ENCODE measurements at regions of chr14 and their contacts with region 1.

Region 1: DNA sequence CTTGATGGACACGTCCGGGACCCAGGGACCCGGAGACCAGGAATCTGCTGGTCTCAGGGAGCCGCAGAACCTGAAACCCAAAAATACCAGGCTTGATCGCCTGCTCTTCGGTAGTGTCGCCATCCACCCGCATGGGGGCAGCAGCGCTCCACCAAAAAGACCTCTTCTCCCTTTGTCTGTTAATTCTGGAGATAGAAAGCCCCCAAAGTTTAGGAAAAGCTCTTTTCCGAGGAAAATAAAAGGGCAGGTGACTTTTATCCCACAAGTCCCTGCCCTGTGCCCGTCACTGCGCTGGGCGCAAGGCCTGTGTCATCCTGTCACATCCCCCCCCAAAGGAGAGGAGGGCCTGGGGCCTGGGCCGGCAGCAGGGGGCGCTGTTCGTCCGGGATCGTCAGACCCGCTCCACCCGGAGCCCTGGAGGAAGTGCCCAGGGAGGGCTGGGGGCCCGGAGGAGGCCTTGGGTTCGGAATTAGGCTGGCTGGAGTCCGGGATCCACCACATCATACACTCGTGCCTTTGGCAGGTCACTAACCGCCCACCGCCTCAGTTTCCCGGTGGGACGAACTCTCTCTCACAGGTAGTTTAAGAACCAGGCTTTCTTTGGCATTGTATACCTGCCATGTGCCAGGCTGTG is 31.9 kb downstream of the DAD1 start:
- DNase-seq: peak; percentile 92 to 94
- ATAC-seq: peak; percentile 32 to 63 (median 34)
- H3K4me3 ChIP-seq: peak overlapping the region; percentile 32
- H3K4me3 Mint-ChIP-seq: peak overlapping the region; percentile 94
- H3K27ac ChIP-seq: peak overlapping the region; percentile 97
- H3K27ac Mint-ChIP-seq: peak overlapping the region; percentile 98 to 100
- H3K4me1 ChIP-seq: peaks cover 98% of the 10 kb centered on the region
- H3K4me1 Mint-ChIP-seq: peaks cover 82 to 91% of the 10 kb centered on the region in 2 donors
- H3K27me3 ChIP-seq: no peaks in the 10 kb centered on the region
- H3K27me3 Mint-ChIP-seq: peaks cover 0 to 4% of the 10 kb centered on the region in 2 donors
- CTCF ChIP-seq: peak; percentile 100

Region 2: GRCh38 chr14:22460461-22461195 is 96.5 kb before region 1 on chr14:
- intact Hi-C with region 1: loop called (anchors 1 kb)
- DNase-seq: peak in 1 of 2 donors; percentile 44
- ATAC-seq: peak; percentile 82 to 94 (median 92)
- H3K4me3 ChIP-seq: peak overlapping the region; percentile 62
- H3K4me3 Mint-ChIP-seq: peak overlapping the region; percentile 96
- H3K27ac ChIP-seq: peak overlapping the region; percentile 79
- H3K27ac Mint-ChIP-seq: peak overlapping the region; percentile 80 to 89
- H3K4me1 ChIP-seq: peaks cover 67% of the 10 kb centered on the region
- H3K4me1 Mint-ChIP-seq: peaks cover 93 to 98% of the 10 kb centered on the region in 2 donors
- H3K27me3 ChIP-seq: no peaks in the 10 kb centered on the region
- H3K27me3 Mint-ChIP-seq: no peaks in the 10 kb centered on the region
- CTCF ChIP-seq: no peak

Region 3: DNA sequence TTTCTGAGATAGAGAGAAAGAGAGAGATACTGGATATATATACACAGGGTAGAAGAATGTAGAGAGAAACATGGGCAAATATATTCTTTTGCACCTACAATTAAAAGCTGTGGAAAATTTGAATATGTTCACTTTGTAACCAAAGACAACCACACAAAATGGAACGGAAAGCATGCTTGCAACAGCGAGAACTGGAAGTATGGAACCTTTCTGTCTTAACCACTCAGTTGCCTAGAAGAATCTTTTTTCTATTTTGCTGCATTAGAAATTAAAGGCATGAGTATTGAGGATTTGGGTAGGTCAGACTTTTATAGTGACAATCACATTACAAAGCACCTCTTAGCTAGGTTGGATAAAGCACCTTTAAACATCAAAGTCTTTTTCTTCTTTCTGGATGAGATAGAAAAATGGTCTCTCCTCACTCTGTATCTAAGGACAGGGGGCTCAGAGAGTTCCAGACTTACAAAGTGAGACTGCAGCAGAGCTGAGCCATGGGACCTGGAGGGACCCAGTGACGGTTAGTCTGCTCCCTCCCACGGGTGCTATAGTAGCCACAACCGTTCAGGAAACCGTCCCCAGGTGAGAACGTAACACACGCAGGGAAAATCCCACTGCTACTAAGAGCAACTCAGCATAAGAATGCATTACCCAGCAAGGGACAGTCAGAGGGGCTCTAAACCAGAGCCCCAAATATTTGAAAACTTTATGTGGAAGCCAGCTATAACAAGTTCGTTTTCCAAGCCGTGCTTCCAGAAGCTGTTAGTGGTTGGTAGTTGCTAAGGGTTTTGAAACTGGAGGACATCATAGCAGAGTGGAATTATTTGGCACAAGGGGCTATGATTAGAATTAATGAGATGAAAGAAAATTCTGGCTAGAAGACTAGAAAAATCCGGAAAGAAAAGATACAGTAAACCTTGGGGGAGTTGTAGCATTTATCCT is 65.2 kb before region 1 on chr14:
- intact Hi-C with region 1: loop called (anchors 1 kb)
- DNase-seq: peak; percentile 47 to 79
- ATAC-seq: peak; percentile 78 to 95 (median 82)
- H3K4me3 ChIP-seq: peak overlapping the region; percentile 2
- H3K4me3 Mint-ChIP-seq: peak overlapping the region; percentile 76
- H3K27ac ChIP-seq: peak overlapping the region; percentile 85
- H3K27ac Mint-ChIP-seq: peak overlapping the region; percentile 80 to 89
- H3K4me1 ChIP-seq: peaks cover 66% of the 10 kb centered on the region
- H3K4me1 Mint-ChIP-seq: peaks cover 82 to 83% of the 10 kb centered on the region in 2 donors
- H3K27me3 ChIP-seq: no peaks in the 10 kb centered on the region
- H3K27me3 Mint-ChIP-seq: no peaks in the 10 kb centered on the region
- CTCF ChIP-seq: no peak

Region 4: DNA sequence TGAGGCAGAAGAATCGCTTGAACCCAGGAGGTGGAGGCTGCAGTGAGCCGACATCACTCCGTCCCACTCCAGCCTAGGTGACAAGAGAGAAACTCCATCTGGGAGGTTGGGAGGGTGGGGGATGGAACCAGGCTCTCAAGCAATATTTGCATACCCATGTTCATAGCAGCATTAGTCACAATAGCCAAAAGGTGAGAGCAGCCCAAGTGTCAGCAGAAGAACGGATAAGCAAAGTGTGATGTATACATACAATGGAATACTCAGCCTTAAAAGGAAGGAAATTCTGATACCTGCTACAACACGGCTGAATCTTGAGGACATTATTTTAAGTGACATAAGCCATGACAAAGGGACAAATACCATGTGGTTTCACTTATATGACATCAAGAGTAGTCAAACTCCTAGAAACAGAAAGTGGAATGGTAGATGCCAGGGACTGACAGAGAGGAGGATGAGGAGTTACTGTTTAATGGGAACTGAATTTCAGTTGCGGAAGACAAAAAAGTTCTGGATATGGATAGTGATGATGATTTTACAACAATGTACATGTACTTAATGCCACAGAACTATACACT is 20.3 kb after region 1 on chr14:
- intact Hi-C with region 1: no loop called
- DNase-seq: no peak
- ATAC-seq: no peak
- H3K4me3 ChIP-seq: no peak overlapping the region
- H3K4me3 Mint-ChIP-seq: no peak overlapping the region
- H3K27ac ChIP-seq: no peak overlapping the region
- H3K27ac Mint-ChIP-seq: peak overlapping the region in 1 of 2 donors; percentile 64
- H3K4me1 ChIP-seq: no peaks in the 10 kb centered on the region
- H3K4me1 Mint-ChIP-seq: peaks cover 6 to 13% of the 10 kb centered on the region in 2 donors
- H3K27me3 ChIP-seq: no peaks in the 10 kb centered on the region
- H3K27me3 Mint-ChIP-seq: no peaks in the 10 kb centered on the region
- CTCF ChIP-seq: no peak

Region 5: GRCh38 chr14:22589096-22589839 is 32.2 kb after region 1 on chr14 and contains the start of gene DAD1:
- intact Hi-C with region 1: loop called (anchors 1 kb)
- DNase-seq: peak; percentile 100
- ATAC-seq: peak; percentile 86 to 96 (median 90)
- H3K4me3 ChIP-seq: peak within 1 kb of the TSS; percentile 80
- H3K4me3 Mint-ChIP-seq: peak within 1 kb of the TSS; percentile 90
- H3K27ac ChIP-seq: peak within 1 kb of the TSS; percentile 97
- H3K27ac Mint-ChIP-seq: peak within 1 kb of the TSS; percentile 97 to 99
- H3K4me1 ChIP-seq: peaks cover 19% of the 10 kb centered on the region
- H3K4me1 Mint-ChIP-seq: peaks cover 45 to 47% of the 10 kb centered on the region in 2 donors
- H3K27me3 ChIP-seq: no peaks in the 10 kb centered on the region
- H3K27me3 Mint-ChIP-seq: peaks cover 13 to 17% of the 10 kb centered on the region in 2 donors
- CTCF ChIP-seq: no peak
- total RNA-seq, gene DAD1: 79.5 to 97.9 (median 92.8) TPM

Region 6: DNA sequence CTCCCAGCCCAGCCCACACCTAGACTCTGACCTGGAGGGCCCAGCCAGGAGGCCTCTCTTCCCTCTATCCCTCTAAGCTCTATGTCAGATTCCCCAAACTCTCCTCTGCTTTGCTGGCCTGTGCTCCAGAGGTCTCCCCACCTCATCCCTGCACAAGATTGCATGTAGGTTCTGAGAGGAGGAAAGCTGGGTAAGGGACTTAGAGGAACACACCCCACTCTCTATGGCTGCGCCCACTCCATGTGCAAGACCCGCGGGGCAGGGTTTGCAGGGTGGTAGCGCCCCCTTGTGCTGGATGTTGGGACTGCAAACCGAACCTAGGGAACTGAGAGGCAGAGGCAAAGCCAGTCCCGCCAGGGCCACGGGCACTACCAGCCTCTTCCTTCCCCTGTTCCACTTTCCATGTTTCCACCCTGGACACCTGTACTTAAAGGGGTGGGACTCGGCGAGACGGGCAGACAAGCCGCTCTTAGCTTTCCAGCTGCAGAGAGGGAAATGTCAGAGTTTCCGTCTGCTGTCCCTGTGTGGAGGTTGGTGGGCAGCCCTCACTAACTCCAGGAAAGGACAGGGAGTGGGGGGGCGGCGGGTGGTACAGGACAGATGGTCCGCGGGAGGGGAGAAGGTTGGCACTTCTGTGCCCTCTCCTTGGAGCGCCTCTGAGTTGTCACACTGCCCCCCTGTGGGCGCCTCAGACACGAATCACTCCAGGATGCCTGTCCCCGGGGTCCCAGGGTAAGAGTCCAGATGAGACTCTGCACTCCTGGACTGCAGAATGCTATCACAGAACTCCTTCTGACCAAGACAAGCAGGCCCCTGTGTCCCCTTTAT is 296.0 kb after region 1 on chr14:
- intact Hi-C with region 1: loop called (anchors 1 kb)
- DNase-seq: peak; percentile 89 to 90
- ATAC-seq: peak; percentile 93 to 95 (median 94)
- H3K4me3 ChIP-seq: peak overlapping the region; percentile 45
- H3K4me3 Mint-ChIP-seq: peak overlapping the region; percentile 75
- H3K27ac ChIP-seq: no peak overlapping the region
- H3K27ac Mint-ChIP-seq: peak overlapping the region in 1 of 2 donors; percentile 78
- H3K4me1 ChIP-seq: peaks cover 21% of the 10 kb centered on the region
- H3K4me1 Mint-ChIP-seq: peaks cover 4 to 9% of the 10 kb centered on the region in 2 donors
- H3K27me3 ChIP-seq: peaks cover 29% of the 10 kb centered on the region
- H3K27me3 Mint-ChIP-seq: peaks cover 24 to 29% of the 10 kb centered on the region in 2 donors
- CTCF ChIP-seq: peak; percentile 97

Region 7: DNA sequence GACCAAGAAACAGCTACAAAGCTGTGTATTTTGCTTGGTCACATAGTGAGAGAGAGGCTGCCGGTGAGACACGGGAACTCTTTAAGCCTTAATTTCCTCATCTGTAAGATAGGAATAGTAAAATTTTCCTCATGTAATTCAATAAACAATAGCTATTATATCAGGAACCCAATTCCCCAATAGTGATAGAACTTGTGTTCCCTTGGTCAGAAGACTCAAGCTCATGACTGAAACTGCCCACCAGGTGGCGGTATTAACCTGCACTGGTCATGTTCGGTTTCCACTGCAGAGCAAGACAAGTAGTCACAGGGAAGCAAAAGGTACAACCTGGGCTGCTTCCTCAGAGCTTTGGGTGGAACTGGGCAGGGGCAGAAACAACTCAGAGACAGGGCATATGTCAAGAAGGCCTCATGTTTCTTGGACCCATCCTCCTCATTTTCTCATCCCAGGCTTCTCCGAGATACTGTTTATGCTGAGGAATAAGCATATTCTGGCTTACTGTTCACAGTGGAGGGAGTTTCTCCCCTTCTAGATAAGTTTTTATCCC is 429.5 kb after region 1 on chr14:
- intact Hi-C with region 1: loop called (anchors 1 kb)
- DNase-seq: peak; percentile 78 to 95
- ATAC-seq: peak; percentile 70 to 82 (median 70)
- H3K4me3 ChIP-seq: no peak overlapping the region
- H3K4me3 Mint-ChIP-seq: no peak overlapping the region
- H3K27ac ChIP-seq: no peak overlapping the region
- H3K27ac Mint-ChIP-seq: no peak overlapping the region
- H3K4me1 ChIP-seq: peaks cover 15% of the 10 kb centered on the region
- H3K4me1 Mint-ChIP-seq: no peaks in the 10 kb centered on the region
- H3K27me3 ChIP-seq: peaks cover 7% of the 10 kb centered on the region
- H3K27me3 Mint-ChIP-seq: no peaks in the 10 kb centered on the region
- CTCF ChIP-seq: peak; percentile 83

Measured in natural killer cell (primary cell).